Transverse colon (tissue), 4 donors: ENCODE measurements at regions of chr7 and their contacts with region 1.

Region 1: GRCh38 chr7:100208911-100209408 is 10.8 kb upstream of the PVRIG start:
- DNase-seq: no peak
- H3K4me3 ChIP-seq: no peak overlapping the region
- H3K27ac ChIP-seq: peak overlapping the region in 2 of 4 donors; percentile 17 to 29
- H3K4me1 ChIP-seq: peaks cover 0 to 35% (median 4%) of the 10 kb centered on the region in 4 donors
- H3K27me3 ChIP-seq: no peaks in the 10 kb centered on the region
- CTCF ChIP-seq: no peak
- EP300 ChIP-seq: no peak
- POLR2A ChIP-seq: no peak

Region 2: DNA sequence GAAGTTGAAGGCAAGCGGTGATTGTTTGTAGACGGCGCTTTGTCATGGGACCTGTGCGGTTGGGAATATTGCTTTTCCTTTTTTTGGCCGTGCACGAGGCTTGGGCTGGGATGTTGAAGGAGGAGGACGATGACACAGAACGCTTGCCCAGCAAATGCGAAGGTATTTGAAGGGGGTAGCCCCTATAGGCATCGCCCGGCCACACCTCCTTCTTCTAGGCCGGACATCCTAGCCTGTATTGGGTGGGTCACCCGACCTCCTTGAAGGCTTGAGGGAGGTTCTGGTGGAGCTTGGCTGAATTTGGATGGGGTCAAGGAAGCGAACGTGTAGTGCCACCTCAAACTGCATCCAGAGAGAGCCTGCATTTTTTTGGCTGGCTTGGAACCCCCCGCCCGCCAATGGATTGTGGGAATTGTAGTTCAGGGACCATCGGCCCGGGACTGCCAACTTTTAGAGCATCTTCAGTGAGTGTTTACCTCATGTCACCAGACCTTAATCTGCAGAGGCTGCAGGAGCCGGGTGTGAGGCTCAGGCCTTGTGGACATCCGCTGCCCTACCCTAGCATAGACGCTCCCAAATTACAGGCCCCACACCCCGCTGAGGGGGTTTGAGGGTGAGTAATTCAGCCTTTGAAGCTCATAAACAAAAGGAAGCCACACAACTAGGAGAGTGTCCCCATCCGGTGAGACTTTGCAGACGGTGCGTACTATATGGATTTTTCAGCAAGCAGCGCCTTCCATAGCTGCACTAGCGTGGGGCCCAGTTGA is 89.1 kb before region 1 on chr7:
- in situ Hi-C with region 1: loop called in 1 of 4 experiments (anchors 5 kb)
- intact Hi-C with region 1: no loop called
- DNase-seq: peak; percentile 68
- H3K4me3 ChIP-seq: peak overlapping the region; percentile 63 to 78 (median 73)
- H3K27ac ChIP-seq: peak overlapping the region; percentile 88 to 94 (median 90)
- H3K4me1 ChIP-seq: peaks cover 6 to 30% (median 26%) of the 10 kb centered on the region in 4 donors
- H3K27me3 ChIP-seq: no peaks in the 10 kb centered on the region
- CTCF ChIP-seq: no peak
- EP300 ChIP-seq: no peak
- POLR2A ChIP-seq: no peak

Region 3: DNA sequence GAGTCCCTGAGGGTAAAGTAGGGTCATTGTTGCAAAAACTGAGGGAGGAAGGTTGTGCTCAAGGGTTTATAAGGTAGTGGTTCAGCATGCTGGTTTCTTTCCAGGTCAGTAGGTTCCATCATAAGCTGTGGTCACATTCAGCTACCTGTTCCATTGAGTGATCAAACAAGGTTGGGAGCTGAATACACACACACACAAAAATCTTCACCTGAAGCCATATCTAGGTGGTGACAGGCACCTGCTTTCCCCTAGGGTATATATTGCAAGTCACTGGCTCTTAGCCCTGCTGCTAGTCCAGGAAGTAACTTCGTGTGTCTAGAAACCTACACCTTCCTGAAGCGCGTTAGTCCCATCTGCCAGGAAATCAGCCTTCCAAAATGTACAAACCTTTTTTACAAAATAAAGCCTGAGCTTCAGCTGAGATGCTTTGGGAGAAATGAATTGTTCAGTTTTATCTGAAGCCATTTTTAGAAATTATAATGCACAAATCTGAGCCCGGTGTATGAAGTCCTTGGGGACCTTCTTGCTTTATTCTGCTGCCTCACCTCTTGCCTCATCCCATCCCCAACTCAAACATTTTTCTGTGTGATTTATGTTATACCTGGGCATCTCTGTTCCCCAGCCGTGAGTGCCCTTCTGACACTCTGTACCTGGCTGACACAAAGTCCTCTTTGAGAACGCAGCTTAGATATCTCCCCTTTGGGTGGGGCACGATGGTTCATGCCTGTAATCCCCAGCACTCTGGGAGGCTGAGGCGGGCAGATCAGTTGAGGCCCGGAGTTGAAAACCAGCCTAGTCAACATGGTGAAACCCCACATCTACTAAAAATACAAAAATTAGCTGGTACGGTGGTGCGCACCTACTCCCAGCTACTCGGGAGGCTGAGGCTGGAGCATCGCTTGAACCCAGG is 70.9 kb before region 1 on chr7:
- in situ Hi-C with region 1: no loop called
- intact Hi-C with region 1: loop called (anchors 5 kb)
- DNase-seq: no peak
- H3K4me3 ChIP-seq: no peak overlapping the region
- H3K27ac ChIP-seq: peak overlapping the region in 3 of 4 donors; percentile 17 to 55 (median 41)
- H3K4me1 ChIP-seq: peaks cover 0 to 21% (median 8%) of the 10 kb centered on the region in 4 donors
- H3K27me3 ChIP-seq: no peaks in the 10 kb centered on the region
- CTCF ChIP-seq: no peak
- EP300 ChIP-seq: no peak
- POLR2A ChIP-seq: no peak